ENCODE measurements at regions of chr2 and their contacts with region 1.

Region 1: GRCh38 chr2:102442967-102443828 is 20.2 kb downstream of the IL18RAP start:
- DNase-seq: peak in 1 of 2 experiments; percentile 3
- H3K4me3 ChIP-seq: no peak overlapping the region
- H3K4me1 ChIP-seq: no peaks in the 10 kb centered on the region
- H3K27me3 ChIP-seq: no peaks in the 10 kb centered on the region

Region 2: DNA sequence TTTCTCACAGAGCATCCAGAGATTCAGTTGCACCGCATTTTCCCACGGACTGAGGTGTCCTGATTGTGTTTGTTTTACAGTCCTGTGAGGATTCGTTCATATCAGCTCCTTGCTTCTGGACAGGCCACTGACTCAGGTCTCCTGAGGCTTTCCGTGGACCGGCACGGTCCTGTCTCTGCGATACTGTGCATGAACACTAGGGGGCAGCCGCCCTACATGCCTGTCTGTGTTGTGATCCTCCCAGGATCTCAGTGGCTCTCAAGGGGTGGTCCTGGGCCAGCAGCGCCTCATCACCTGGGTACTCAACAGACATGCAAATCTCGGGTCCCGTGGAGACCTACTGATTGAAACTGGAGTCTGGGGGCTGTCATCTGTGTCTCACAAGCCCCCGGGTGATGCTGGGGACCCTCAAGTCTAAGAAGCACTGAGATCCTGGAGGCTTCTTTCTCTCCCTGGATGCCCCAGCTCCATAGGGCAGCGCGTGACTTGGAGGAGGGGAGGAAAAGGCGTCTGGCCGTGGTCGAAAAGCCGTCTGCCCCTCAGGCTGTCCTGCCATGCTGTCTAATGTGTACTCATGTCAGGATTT is 422.5 kb before region 1 on chr2:
- in situ Hi-C with region 1: loop called (anchors 25 kb)
- DNase-seq: peak; percentile 29 to 85
- H3K4me3 ChIP-seq: no peak overlapping the region
- H3K4me1 ChIP-seq: no peaks in the 10 kb centered on the region
- H3K27me3 ChIP-seq: no peaks in the 10 kb centered on the region

Measured in HAP-1 (cell line).